GM18951 (cell line): ENCODE measurements at regions of chr2 and their contacts with region 1.

Region 1: DNA sequence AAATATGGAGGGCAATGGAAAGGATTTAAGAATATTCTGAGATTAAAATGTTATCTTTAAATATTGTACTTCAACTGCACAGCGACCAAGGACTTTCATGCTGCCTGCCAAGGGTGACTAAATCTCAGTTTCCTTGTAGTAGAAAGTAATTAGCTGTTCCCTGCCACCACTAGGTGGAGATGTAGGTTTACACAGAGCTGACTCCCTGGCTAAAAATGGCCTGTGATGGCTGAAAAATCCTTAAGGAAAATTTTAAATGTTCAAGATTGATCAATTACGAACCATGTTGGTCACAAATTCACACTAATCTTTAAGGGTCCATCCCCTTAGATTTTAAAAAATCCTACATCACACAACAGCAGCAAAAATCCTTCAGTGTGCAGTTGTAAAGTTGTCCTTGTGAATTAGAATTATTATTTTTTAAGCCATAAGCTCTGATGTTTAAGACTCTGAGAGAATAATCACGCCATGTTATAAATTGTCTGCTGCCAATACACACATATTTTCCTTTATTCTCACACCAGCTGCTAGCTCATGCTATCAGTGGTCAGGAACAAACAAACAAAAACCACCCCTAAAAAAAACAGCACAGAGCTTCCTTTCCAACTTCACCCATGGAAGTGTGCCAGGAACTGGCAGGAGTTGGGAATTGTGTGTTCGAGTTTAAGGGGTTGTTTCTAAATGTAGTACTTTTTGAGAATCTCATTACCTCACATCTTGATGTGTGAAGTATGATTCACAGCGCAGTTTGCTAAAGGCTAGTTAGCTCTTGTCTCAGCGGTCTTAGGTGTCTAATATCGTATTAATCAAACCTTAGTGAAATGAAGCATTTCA is 399.8 kb downstream of the TMEM182 start:
- POLR2A ChIP-seq: no peak

Region 2: GRCh38 chr2:102771114-102771513 is 390.6 kb before region 1 on chr2:
- in situ Hi-C with region 1: no loop called
- POLR2A ChIP-seq: no peak

Region 3: GRCh38 chr2:103284750-103285149 is 123.1 kb after region 1 on chr2:
- in situ Hi-C with region 1: no loop called
- POLR2A ChIP-seq: no peak

Region 4: DNA sequence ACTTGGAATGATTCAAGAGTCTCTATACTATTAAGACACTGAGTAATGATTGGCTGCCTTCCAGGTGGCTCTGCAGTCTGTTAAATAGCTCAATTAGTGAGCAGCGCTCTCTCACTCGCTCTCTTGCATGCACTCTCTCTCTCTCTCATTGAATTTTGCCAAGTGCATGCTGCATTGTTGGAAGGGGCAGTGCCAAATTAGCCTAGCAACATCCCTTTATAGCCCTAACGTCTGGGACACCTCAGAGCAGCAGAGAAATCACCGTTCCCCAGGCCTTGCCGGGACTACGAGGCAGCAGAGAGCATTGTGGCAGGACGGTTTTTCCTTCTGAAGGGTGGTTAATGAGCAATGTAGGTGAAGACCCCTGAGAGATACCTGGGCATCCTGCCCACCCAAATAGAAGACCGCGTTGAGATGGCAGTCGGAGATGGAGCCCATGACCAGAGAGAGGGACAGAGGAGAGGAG is 1244.6 kb after region 1 on chr2:
- in situ Hi-C with region 1: loop called (anchors 10 kb)
- POLR2A ChIP-seq: no peak